H1 (cell line): ENCODE measurements at regions of chr12 and their contacts with region 1.

Region 1: DNA sequence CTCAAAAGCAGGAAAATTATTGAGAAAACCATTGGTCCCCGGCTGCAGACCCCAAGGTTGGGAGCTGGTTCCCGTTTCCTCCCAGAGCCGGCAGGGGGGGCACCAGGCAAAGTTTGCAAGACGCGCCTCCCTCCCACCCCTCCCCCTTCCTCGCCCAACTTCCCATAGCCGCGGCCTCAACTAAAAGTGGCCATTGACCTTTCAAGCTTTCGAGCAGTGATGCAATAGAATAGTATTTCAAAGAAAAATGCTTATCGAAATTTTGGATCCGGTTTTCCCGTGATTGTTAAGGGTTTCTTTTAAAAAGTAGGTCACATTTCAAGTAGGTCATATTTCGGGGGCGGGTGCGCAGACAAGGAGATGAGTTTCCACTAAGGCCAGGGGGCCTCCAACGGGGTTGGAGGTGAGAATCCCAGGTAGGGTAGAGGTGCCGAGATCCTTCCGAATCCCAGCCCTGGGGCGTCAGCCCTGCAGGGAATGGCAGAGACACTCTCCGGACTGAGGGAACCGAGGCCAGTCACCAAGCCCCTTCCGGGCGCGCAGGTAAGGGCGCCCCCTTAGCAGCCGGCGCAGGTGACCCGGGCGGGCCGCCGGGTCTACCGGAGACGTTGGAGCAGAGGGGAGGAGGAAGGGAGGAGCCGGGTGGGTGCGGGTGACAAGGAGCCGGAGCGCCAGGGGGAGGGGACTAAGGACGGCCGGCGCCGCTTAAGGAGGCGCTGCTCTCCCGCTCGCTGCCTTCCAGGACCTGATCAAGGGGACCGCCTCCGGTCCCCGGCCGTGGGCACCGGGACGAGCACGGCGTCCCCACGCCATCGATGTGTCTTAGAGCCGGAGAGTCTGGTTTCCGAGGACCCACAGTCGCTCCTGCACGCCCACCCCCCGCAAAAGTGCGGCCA is 2.6 kb upstream of the SOCS2 start:
- DNase-seq: peak in 1 of 2 experiments; percentile 91
- H3K4me3 ChIP-seq: peak overlapping the region; percentile 68 to 82 (median 74)
- H3K27ac ChIP-seq: no peak overlapping the region
- H3K4me1 ChIP-seq: peaks cover 0 to 2% (median 0%) of the 10 kb centered on the region in 4 experiments; a peak in 5 of 7 replicates
- H3K27me3 ChIP-seq: peaks cover 0 to 30% (median 18%) of the 10 kb centered on the region in 4 experiments; a peak in 5 of 7 replicates
- CTCF ChIP-seq: peak; percentile 63 to 84 (median 70)
- EP300 ChIP-seq: no peak
- POLR2A ChIP-seq: no peak; a peak in 1 of 3 replicates
- RAD21 ChIP-seq: peak; percentile 87 to 91

Region 2: DNA sequence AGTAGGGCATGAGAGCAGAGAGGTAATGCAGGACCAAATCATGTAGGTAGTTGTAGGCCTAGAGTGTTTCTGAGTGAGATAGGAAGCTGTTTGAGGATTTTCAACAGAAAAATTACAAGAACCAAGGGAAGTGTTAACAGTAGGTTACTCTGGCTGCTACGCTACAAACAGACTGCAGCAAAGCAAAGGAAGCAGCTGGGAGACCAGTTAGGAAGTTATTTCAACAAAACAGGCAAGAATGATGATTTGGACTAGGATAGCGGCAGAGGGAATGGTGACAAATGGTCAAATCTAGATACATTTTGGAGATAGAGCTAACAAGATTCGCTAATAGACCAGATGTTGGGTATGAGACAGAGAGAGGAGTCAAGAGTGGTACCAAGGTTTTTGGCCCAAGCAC is 75.8 kb before region 1 on chr12:
- CTCF ChIA-PET with region 1: no interaction called
- POLR2A ChIA-PET with region 1: no interaction called
- DNase-seq: no peak
- H3K4me3 ChIP-seq: no peak overlapping the region
- H3K27ac ChIP-seq: no peak overlapping the region
- H3K4me1 ChIP-seq: no peaks in the 10 kb centered on the region
- H3K27me3 ChIP-seq: no peaks in the 10 kb centered on the region
- CTCF ChIP-seq: no peak
- EP300 ChIP-seq: no peak
- POLR2A ChIP-seq: no peak
- RAD21 ChIP-seq: no peak

Region 3: DNA sequence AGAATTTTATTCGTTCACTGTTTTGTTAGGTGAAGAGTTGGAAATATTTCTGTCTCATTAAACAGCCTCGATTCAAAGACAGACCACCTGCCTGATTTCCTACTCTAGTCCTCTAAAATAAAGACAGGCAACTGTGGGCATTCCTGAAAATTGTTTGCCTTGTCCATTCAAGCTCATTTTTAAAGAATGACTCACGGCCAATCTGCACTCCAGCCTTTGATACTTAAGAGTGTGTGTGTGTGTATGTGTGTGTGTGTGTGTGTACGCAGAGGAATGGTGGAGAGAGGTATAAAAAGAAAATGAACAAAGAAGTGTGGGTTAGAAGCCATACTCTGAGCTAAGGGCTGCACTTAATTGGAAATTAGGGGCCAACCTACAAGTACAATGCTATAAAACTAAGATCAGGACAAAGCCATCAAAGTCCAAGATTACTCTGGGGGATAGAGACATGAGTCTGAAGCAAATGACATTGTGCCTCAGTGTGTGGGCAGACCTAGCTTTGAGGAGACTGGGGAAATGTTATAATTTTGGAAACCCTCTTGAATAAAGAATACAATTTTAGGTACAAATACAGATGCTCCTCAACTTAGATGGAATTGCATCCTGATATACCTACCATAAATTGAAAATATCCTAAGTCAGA is 43.0 kb before region 1 on chr12:
- CTCF ChIA-PET with region 1: interaction called, 12 read pairs
- POLR2A ChIA-PET with region 1: no interaction called
- DNase-seq: no peak
- H3K4me3 ChIP-seq: no peak overlapping the region
- H3K27ac ChIP-seq: no peak overlapping the region
- H3K4me1 ChIP-seq: no peaks in the 10 kb centered on the region
- H3K27me3 ChIP-seq: no peaks in the 10 kb centered on the region
- CTCF ChIP-seq: no peak
- EP300 ChIP-seq: no peak
- POLR2A ChIP-seq: no peak
- RAD21 ChIP-seq: no peak

Region 4: GRCh38 chr12:93591137-93591868 is 21.4 kb after region 1 on chr12:
- CTCF ChIA-PET with region 1: interaction called, 8 read pairs
- POLR2A ChIA-PET with region 1: interaction called, 16 read pairs
- DNase-seq: no peak
- H3K4me3 ChIP-seq: peak overlapping the region; percentile 48 to 64 (median 60)
- H3K27ac ChIP-seq: no peak overlapping the region
- H3K4me1 ChIP-seq: peaks cover 0 to 6% (median 3%) of the 10 kb centered on the region in 4 experiments; a peak in 3 of 7 replicates
- H3K27me3 ChIP-seq: peaks cover 0 to 5% (median 4%) of the 10 kb centered on the region in 4 experiments; a peak in 5 of 7 replicates
- CTCF ChIP-seq: no peak
- EP300 ChIP-seq: no peak
- POLR2A ChIP-seq: peak in 1 of 2 experiments; percentile 37; a peak in 1 of 3 replicates
- RAD21 ChIP-seq: no peak

Region 5: DNA sequence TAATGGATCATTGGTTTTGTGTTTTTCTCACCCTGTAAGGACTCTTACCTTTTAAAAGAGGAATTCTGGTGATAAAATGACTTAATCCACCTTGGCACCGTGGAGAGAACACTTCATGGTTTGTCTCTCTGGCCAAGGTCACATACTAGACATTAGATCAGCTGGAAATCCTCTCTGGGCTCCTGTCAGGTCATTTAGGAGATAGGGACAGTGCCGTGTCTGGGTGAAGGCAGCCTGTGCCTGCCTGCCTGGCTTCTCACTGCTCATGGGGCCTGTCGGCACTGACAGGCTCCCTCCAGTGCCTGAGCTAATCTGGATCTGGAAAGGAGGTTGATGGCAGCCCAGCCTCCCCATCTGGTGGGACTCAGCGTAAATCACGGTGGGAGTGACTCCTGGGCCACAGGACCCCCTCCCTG is 113.0 kb after region 1 on chr12:
- CTCF ChIA-PET with region 1: interaction called, 15 read pairs
- POLR2A ChIA-PET with region 1: interaction called, 5 read pairs
- DNase-seq: no peak
- H3K4me3 ChIP-seq: no peak overlapping the region
- H3K27ac ChIP-seq: no peak overlapping the region
- H3K4me1 ChIP-seq: peaks cover 3 to 5% (median 4%) of the 10 kb centered on the region in 4 experiments; a peak in 4 of 7 replicates
- H3K27me3 ChIP-seq: no peaks in the 10 kb centered on the region
- CTCF ChIP-seq: no peak
- EP300 ChIP-seq: no peak
- POLR2A ChIP-seq: no peak
- RAD21 ChIP-seq: 0 out of 4 replicates have a peak, but pooled peaks of 1 of the 2 experiments have one; percentile 25

Region 6: GRCh38 chr12:93751864-93752610 is 182.1 kb after region 1 on chr12:
- CTCF ChIA-PET with region 1: interaction called, 10 read pairs
- POLR2A ChIA-PET with region 1: no interaction called
- DNase-seq: no peak
- H3K4me3 ChIP-seq: no peak overlapping the region
- H3K27ac ChIP-seq: no peak overlapping the region
- H3K4me1 ChIP-seq: no peaks in the 10 kb centered on the region
- H3K27me3 ChIP-seq: no peaks in the 10 kb centered on the region
- CTCF ChIP-seq: no peak
- EP300 ChIP-seq: no peak
- POLR2A ChIP-seq: no peak
- RAD21 ChIP-seq: no peak